Activated T-helper 2 cell treated with anti-CD3 and anti-CD28 coated beads, Interferon-gamma antibody, Interleukin-2, Interleukin-4, amounts not matched to agents 10 μg/mL and 5 μg/mL and 100 μg/mL, durations not matched to agents 14 hours and 24 hours and 36 hours (primary cell): ENCODE measurements at regions of chr20 and their contacts with region 1.

Region 1: DNA sequence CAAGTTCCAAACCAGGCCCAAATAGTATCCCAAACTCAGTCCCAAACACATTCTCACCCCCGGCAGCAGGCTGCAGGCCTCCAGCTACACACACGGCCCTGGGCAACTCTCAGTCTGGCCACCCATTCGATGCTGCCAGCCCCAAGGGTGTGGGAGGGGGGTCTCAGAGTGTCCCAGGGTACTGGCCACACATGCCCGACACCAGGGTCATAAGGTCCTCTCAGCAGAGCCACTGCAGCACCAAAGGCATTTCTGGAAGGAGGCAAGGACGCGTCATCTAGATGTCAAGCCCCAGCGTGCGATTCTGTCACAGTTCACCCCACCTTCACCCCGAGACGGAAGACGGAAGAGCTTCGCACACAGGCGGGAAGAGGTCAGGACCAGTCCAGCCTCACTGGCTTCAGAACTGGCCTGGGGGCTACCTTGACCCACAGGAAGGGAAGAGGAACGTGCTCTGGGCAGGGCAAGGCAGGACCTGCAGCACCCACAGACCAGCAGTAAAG is 9.5 kb downstream of the MYL9 start:
- DNase-seq: no peak
- H3K4me3 Mint-ChIP-seq: no peak overlapping the region
- H3K27ac Mint-ChIP-seq: no peak overlapping the region
- H3K4me1 Mint-ChIP-seq: peaks cover 2% of the 10 kb centered on the region
- H3K27me3 Mint-ChIP-seq: no peaks in the 10 kb centered on the region

Region 2: GRCh38 chr20:36399147-36399968 is 151.5 kb before region 1 on chr20:
- intact Hi-C with region 1: no loop called
- DNase-seq: peak; percentile 24
- H3K4me3 Mint-ChIP-seq: no peak overlapping the region
- H3K27ac Mint-ChIP-seq: no peak overlapping the region
- H3K4me1 Mint-ChIP-seq: no peaks in the 10 kb centered on the region
- H3K27me3 Mint-ChIP-seq: peaks cover 12% of the 10 kb centered on the region

Region 3: GRCh38 chr20:36519944-36520343 is 30.9 kb before region 1 on chr20:
- intact Hi-C with region 1: no loop called
- DNase-seq: no peak
- H3K4me3 Mint-ChIP-seq: no peak overlapping the region
- H3K27ac Mint-ChIP-seq: peak overlapping the region; percentile 87
- H3K4me1 Mint-ChIP-seq: peaks cover 20% of the 10 kb centered on the region
- H3K27me3 Mint-ChIP-seq: no peaks in the 10 kb centered on the region

Region 4: DNA sequence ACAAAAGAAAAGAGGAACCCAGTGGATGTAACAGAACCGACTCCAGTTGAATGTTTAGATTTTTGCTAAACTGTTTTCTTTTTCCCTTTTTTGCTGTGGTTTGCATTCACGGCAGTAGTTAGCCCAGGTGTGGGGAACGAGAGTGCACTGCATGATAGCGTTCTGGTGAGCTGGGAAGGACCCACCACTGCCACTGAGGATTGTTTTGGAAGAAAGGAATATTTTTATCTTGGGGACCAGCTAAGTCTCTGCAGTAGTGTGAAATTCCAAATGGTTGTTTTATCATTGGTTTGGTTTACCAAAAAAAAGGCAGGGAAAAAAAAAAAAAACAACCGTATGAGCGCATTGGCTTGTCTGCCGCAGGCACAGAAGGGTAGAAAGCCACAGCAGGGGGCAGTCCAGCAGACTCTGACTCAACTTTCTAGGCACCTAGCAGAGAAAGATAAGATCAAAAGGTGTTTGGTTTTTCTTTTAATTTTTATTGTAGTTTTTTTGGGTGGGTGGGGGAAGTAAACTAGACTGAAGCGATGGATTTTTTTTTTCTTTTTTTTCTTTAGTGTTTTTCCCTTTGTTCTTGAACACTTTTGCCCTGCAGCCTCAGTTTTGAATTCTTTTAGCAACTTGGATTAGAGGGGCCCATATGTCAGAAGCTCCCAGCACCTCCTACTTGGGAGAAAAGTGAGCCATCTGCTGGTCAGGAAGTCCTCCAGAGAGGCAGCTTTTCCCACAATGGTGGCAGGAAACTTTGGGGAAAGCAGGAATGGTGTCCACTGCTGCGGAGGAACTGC is 41.2 kb after region 1 on chr20:
- intact Hi-C with region 1: loop called (anchors 5 kb)
- DNase-seq: peak; percentile 44
- H3K4me3 Mint-ChIP-seq: peak overlapping the region; percentile 48
- H3K27ac Mint-ChIP-seq: peak overlapping the region; percentile 62
- H3K4me1 Mint-ChIP-seq: peaks cover 54% of the 10 kb centered on the region
- H3K27me3 Mint-ChIP-seq: no peaks in the 10 kb centered on the region

Region 5: DNA sequence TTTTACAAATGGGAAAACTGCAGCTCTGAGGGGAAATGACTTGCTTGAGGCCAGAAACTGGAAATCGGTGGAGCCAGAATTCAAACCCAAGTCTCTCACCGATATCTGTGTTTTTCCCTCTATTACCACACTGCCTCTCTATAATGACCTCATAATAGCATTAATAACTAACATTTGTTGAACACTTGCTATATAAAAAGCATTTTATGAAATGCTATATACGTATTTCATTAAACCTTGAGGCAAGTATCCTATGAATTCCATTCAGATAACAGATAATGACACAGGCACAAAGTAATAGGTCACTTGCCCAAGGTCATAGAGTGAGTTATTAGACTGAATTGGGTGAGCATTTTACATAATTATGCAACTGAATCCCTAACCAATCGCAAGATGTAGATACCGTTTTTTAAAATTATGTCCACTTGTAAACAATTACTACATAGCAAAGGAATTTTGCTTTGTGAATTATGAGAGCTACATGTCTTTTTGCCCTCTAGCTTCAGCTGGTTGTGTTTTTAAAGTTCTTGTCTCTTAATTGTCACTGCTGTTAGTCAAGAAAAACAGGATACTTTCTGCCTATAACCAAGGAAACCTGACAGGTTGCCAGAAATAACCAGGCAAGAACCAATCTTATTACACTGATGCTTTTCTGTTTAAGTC is 218.1 kb after region 1 on chr20:
- intact Hi-C with region 1: no loop called
- DNase-seq: no peak
- H3K4me3 Mint-ChIP-seq: no peak overlapping the region
- H3K27ac Mint-ChIP-seq: no peak overlapping the region
- H3K4me1 Mint-ChIP-seq: peaks cover 26% of the 10 kb centered on the region
- H3K27me3 Mint-ChIP-seq: no peaks in the 10 kb centered on the region

Region 6: GRCh38 chr20:37161830-37162549 is 611.1 kb after region 1 on chr20:
- intact Hi-C with region 1: no loop called
- DNase-seq: no peak
- H3K4me3 Mint-ChIP-seq: no peak overlapping the region
- H3K27ac Mint-ChIP-seq: no peak overlapping the region
- H3K4me1 Mint-ChIP-seq: no peaks in the 10 kb centered on the region
- H3K27me3 Mint-ChIP-seq: peaks cover 15% of the 10 kb centered on the region